Naive thymus-derived CD4-positive, alpha-beta T cell (primary cell): ENCODE measurements at regions of chr11 and their contacts with region 1.

Region 1: GRCh38 chr11:74492974-74493790 is at the start of gene LIPT2:
- DNase-seq: peak; percentile 92 to 98 (median 96)
- ATAC-seq: peak; percentile 97
- H3K4me3 ChIP-seq: peak within 1 kb of the TSS; percentile 90
- H3K4me3 Mint-ChIP-seq: peak within 1 kb of the TSS; percentile 74 to 92 (median 86)
- H3K27ac ChIP-seq: peak within 1 kb of the TSS; percentile 95
- H3K27ac Mint-ChIP-seq: peak within 1 kb of the TSS; percentile 73 to 96 (median 89)
- H3K4me1 ChIP-seq: peaks cover 8 to 10% of the 10 kb centered on the region in 2 donors
- H3K4me1 Mint-ChIP-seq: peaks cover 14 to 43% (median 28%) of the 10 kb centered on the region in 7 donors
- H3K27me3 ChIP-seq: no peaks in the 10 kb centered on the region
- H3K27me3 Mint-ChIP-seq: no peaks in the 10 kb centered on the region
- total RNA-seq, gene LIPT2: 1.9 to 18.2 (median 9.3) TPM

Region 2: DNA sequence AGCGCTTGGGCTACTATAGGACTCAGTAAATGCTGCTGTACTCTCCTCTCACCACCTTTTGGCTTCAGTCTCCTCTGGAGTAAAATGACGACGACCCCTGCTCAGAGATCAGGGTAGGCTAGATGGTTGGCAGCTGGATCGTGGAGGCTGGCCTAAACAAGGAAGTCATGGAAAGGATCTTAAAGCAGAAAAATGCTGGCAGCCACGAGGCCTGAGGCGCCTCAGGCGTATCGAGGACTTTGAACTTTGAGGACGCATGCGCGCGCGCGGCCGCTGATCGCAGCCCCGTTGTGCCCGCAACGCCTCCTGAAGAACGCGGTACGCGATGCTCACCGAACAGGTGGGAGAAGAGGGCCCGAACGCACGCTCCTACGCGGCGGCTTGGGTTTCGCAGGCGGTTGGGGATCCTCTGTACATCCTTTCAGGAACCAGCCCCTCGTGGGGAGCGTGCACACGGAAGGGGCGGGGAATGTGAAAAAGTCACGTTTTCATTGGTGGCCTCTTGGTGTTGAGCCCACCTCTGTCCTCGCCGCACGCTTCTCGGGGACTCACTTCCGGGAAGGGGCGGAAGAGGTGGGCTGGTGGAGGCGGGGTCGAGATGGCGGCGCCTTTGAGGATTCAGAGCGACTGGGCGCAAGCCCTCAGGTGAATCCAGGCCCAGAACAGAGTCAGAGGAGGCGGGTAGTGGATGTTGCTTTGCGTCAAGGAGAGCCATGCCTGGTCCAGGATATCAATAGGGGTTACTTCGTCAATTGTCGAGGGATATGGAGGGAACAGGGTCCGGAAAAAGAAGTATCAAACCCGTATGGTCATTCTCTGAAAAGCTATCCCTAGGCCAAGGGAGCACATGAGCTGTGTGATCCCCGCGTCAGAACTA is 616.5 kb before region 1 on chr11 and contains the starts of genes COA4 and PAAF1:
- CTCF ChIA-PET with region 1: no interaction called
- POLR2A ChIA-PET with region 1: no interaction called
- intact Hi-C with region 1: loop called (anchors 2 to 5 kb)
- DNase-seq: peak; percentile 72 to 95 (median 94)
- ATAC-seq: peak; percentile 99
- H3K4me3 ChIP-seq: peak within 1 kb of the TSS; percentile 94
- H3K4me3 Mint-ChIP-seq: peak within 1 kb of the TSS; percentile 94 to 98 (median 96)
- H3K27ac ChIP-seq: peak within 1 kb of the TSS; percentile 88
- H3K27ac Mint-ChIP-seq: peak within 1 kb of the TSS; percentile 92 to 100 (median 97)
- H3K4me1 ChIP-seq: peaks cover 17 to 19% of the 10 kb centered on the region in 2 donors
- H3K4me1 Mint-ChIP-seq: peaks cover 20 to 55% (median 43%) of the 10 kb centered on the region in 7 donors
- H3K27me3 ChIP-seq: no peaks in the 10 kb centered on the region
- H3K27me3 Mint-ChIP-seq: no peaks in the 10 kb centered on the region
- total RNA-seq, gene COA4: 29.1 to 75.0 (median 58.2) TPM
- total RNA-seq, gene PAAF1: 12.4 to 22.7 (median 20.3) TPM

Region 3: GRCh38 chr11:74506823-74507222 is 13.6 kb after region 1 on chr11:
- CTCF ChIA-PET with region 1: no interaction called
- POLR2A ChIA-PET with region 1: interaction called, 12 read pairs
- intact Hi-C with region 1: no loop called
- DNase-seq: no peak
- ATAC-seq: no peak
- H3K4me3 ChIP-seq: no peak overlapping the region
- H3K4me3 Mint-ChIP-seq: no peak overlapping the region
- H3K27ac ChIP-seq: no peak overlapping the region
- H3K27ac Mint-ChIP-seq: no peak overlapping the region
- H3K4me1 ChIP-seq: no peaks in the 10 kb centered on the region
- H3K4me1 Mint-ChIP-seq: no peaks in the 10 kb centered on the region
- H3K27me3 ChIP-seq: no peaks in the 10 kb centered on the region
- H3K27me3 Mint-ChIP-seq: peaks cover under 1 to 7% (median 6%) of the 10 kb centered on the region in 5 donors

Region 4: DNA sequence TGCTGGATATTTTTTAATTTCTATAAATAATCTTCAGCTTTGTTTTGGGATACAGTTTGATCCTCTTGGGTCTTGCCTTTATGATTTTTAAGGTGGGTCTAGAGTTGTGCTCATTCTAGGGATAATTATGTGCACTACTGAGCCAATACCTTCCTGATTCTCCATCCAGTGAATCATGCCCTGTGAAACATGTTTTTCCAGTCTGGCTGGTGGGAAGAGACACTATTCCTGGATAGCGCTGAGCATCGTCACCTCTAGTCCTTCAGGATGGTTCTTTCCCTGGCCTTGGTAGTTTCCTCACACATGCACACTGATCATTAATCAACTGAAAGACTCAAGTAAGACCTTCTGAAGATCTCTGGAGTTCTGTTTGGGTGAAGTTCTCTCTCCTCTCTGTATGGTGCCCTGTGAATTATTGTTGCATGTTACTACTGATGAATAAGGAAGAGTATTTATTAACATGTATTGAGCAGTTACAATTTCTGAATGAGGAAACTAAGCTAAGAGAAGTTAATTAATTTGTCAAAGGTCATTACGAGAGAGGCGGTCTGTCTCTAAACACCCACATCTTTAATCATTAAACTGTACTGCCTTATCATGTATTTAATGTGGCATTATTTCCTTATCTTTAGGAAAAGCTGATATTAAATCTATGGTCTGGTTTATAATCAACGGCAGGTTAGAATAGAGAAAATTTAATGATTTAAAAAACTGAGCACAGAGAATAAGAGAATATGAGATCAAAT is 39.5 kb after region 1 on chr11:
- CTCF ChIA-PET with region 1: no interaction called
- POLR2A ChIA-PET with region 1: no interaction called
- intact Hi-C with region 1: no loop called
- DNase-seq: no peak
- ATAC-seq: no peak
- H3K4me3 ChIP-seq: no peak overlapping the region
- H3K4me3 Mint-ChIP-seq: no peak overlapping the region
- H3K27ac ChIP-seq: no peak overlapping the region
- H3K27ac Mint-ChIP-seq: no peak overlapping the region
- H3K4me1 ChIP-seq: no peaks in the 10 kb centered on the region
- H3K4me1 Mint-ChIP-seq: no peaks in the 10 kb centered on the region
- H3K27me3 ChIP-seq: no peaks in the 10 kb centered on the region
- H3K27me3 Mint-ChIP-seq: peaks cover 0 to 6% (median 0%) of the 10 kb centered on the region in 5 donors

Region 5: GRCh38 chr11:74592441-74593362 is 99.5 kb after region 1 on chr11 and contains the start of gene POLD3:
- CTCF ChIA-PET with region 1: no interaction called
- POLR2A ChIA-PET with region 1: interaction called, 32 read pairs
- intact Hi-C with region 1: loop called (anchors 1 kb)
- DNase-seq: peak; percentile 83 to 97 (median 94)
- ATAC-seq: peak; percentile 99
- H3K4me3 ChIP-seq: peak within 1 kb of the TSS; percentile 98
- H3K4me3 Mint-ChIP-seq: peak within 1 kb of the TSS; percentile 90 to 100 (median 92)
- H3K27ac ChIP-seq: peak within 1 kb of the TSS; percentile 96
- H3K27ac Mint-ChIP-seq: peak within 1 kb of the TSS; percentile 90 to 99 (median 95)
- H3K4me1 ChIP-seq: peaks cover 9% of the 10 kb centered on the region in 2 donors
- H3K4me1 Mint-ChIP-seq: peaks cover 7 to 33% (median 27%) of the 10 kb centered on the region in 7 donors
- H3K27me3 ChIP-seq: no peaks in the 10 kb centered on the region
- H3K27me3 Mint-ChIP-seq: peaks cover 0 to 5% (median 0%) of the 10 kb centered on the region in 5 donors
- total RNA-seq, gene POLD3: 8.0 to 40.8 (median 14.7) TPM

Region 6: DNA sequence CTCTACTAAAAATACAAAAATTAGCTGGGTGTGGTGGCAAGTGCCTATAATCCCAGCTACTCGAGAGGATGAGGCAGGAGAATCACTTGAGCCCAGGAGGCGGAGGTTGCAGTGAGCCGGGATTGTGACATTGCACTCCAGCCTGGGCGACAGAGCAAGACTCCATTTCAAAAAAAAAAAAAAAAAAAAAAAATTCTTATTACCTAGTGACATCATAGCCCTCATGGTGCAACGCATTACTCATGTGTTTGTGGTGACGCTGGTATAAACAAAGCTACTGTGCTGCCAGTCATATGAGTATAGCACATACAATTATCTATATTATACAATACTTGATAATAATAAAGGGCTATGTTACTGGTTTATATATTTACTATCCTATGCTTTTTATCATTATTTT is 562.3 kb after region 1 on chr11:
- CTCF ChIA-PET with region 1: no interaction called
- POLR2A ChIA-PET with region 1: no interaction called
- intact Hi-C with region 1: no loop called
- DNase-seq: no peak
- ATAC-seq: no peak
- H3K4me3 ChIP-seq: no peak overlapping the region
- H3K4me3 Mint-ChIP-seq: no peak overlapping the region
- H3K27ac ChIP-seq: no peak overlapping the region
- H3K27ac Mint-ChIP-seq: no peak overlapping the region
- H3K4me1 ChIP-seq: no peaks in the 10 kb centered on the region
- H3K4me1 Mint-ChIP-seq: peaks cover 0 to 1% (median 0%) of the 10 kb centered on the region in 7 donors
- H3K27me3 ChIP-seq: no peaks in the 10 kb centered on the region
- H3K27me3 Mint-ChIP-seq: peaks cover 12 to 27% (median 21%) of the 10 kb centered on the region in 5 donors